ENCODE measurements at regions of chr5 and their contacts with region 1.

Region 1: DNA sequence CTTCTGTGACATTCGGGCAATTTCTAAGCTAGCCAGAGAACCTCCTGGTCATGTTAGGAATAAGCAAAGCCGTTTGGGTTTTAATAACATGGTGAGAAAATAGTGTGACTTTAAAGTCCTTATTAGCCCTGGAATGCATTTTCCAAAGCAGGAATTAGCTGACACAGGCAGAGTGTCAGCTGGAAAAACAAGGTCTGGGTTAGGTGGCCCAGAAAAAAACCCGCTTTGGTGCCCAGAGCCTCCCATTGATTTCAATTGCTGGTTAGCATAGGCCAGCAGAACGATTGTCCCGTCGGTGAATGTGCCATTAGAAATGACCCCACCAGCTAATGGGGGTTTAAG is 62.1 kb upstream of the CPEB4 start:
- DNase-seq: no peak
- H3K4me3 ChIP-seq: no peak overlapping the region
- H3K27ac ChIP-seq: no peak overlapping the region
- H3K4me1 ChIP-seq: no peaks in the 10 kb centered on the region
- H3K27me3 ChIP-seq: no peaks in the 10 kb centered on the region
- CTCF ChIP-seq: no peak

Region 2: DNA sequence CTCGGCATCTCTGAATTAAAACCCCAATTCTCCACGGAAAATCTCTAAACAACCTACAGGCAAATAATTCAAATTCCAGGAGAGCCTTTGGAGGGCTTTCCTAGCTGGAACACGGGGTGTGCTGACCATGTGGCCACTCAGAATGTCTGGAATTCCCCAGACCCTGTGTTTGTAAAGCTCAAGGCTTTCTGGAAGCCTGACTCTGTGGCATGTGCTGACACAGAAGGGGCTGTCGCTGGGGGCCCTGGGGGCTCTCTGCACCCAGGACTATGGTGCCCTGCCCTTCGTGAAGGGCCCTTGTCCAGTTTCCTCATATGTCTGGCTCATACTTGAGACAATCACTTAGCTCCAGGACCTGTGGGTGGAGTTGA is 180.6 kb before region 1 on chr5:
- CTCF ChIA-PET with region 1: no interaction called
- POLR2A ChIA-PET with region 1: interaction called, 18 read pairs
- intact Hi-C with region 1: no loop called
- DNase-seq: no peak
- H3K4me3 ChIP-seq: no peak overlapping the region
- H3K27ac ChIP-seq: no peak overlapping the region
- H3K4me1 ChIP-seq: no peaks in the 10 kb centered on the region
- H3K27me3 ChIP-seq: no peaks in the 10 kb centered on the region
- CTCF ChIP-seq: no peak